ENCODE measurements at regions of chr15 and their contacts with region 1.

Region 1: DNA sequence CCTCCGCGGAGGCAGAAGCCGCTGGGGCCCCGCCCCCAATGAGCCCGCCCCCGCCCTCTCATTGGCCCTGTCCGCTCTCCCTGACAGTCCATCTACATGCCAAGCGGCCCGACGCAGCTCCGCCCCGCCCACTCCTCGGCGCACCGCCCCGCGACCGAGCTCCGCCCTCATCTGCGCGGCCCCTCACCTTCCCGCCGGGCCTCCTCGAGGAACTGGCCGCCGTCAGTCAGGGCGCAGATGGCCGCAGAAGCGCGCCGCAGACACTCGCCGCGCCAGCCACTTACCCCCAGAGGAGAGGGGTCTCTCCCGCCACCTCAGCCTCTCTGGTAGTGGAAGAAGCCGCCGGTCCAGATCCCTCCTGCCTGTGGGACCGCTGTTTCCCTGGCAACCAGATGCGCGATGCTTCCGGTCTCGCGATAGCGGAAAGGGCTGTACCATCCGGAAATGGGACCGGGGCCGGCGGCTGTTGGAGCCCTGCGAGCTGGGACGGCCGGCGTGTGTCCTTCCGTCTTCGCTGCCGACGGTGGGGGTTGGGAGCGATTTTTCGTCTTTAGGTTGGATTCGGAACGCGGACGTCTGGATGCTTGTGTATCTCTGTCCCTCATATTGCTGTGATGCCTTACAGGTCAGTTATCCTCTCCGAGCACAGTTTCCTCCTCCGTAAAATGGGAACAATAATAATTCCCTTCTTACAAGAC is at the start of gene FSIP1:
- DNase-seq: peak; percentile 97
- H3K4me3 Mint-ChIP-seq: peak within 1 kb of the TSS; percentile 79
- H3K27ac Mint-ChIP-seq: peak within 1 kb of the TSS; percentile 93
- H3K4me1 Mint-ChIP-seq: peaks cover 41% of the 10 kb centered on the region
- H3K27me3 Mint-ChIP-seq: no peaks in the 10 kb centered on the region
- total RNA-seq, gene FSIP1: 0.29 to 0.68 TPM

Region 2: GRCh38 chr15:38554354-38554753 is 1228.2 kb before region 1 on chr15:
- CTCF ChIA-PET with region 1: no interaction called
- POLR2A ChIA-PET with region 1: no interaction called
- intact Hi-C with region 1: loop called (anchors 10 kb)
- DNase-seq: peak; percentile 72
- H3K4me3 Mint-ChIP-seq: peak overlapping the region; percentile 15
- H3K27ac Mint-ChIP-seq: peak overlapping the region; percentile 99
- H3K4me1 Mint-ChIP-seq: peaks cover 89% of the 10 kb centered on the region
- H3K27me3 Mint-ChIP-seq: no peaks in the 10 kb centered on the region

Region 3: DNA sequence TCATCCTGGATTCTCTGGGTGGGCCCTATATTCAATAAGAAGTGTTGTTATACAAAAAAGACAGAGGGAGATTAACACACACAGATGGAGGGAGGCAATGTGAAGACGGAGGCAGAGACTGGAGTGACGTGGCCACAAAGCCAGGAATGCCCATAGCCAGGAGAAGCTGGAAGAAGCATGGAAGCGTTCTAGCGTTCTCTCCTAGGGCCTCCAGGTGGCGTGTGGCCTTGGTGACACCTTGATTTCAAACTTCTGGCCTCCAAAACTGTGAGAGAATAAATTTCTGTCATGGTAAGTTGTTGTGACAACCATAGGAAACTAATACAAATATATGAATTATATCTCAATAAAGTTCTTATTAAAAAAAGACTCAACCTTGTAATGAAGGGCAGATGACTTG is 180.4 kb before region 1 on chr15:
- CTCF ChIA-PET with region 1: no interaction called
- POLR2A ChIA-PET with region 1: no interaction called
- intact Hi-C with region 1: no loop called
- DNase-seq: no peak
- H3K4me3 Mint-ChIP-seq: no peak overlapping the region
- H3K27ac Mint-ChIP-seq: no peak overlapping the region
- H3K4me1 Mint-ChIP-seq: no peaks in the 10 kb centered on the region
- H3K27me3 Mint-ChIP-seq: no peaks in the 10 kb centered on the region

Region 4: DNA sequence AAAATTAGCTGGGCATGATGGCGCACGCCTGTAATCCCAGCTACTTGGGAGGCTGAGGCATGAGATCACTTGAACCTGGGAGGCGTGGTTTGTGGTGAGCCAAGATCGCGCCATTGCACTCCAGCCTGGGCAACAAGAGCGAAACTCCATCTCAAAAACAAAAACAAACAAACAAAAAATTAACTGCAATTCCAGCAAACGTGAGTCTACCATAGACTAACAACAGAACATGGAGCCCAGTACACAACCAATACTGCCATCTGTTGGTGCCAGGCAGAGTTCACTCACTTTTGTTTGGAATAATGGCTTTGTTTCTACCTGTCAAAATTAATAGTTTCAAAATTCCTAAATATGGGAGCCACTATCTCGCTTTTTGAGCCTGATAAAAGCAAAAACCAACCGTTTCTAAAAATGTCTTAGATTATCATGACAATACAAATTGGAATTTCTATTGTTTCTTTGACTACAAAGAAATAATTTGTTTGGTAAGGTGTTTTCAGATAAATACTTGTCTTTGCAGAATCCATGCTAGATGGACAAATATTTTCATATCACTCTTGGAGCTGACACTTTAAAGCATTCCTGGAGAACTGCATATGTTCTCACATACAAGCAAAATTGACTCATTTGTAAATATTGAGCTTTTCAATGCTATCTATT is 92.4 kb after region 1 on chr15:
- CTCF ChIA-PET with region 1: interaction called, 29 read pairs
- POLR2A ChIA-PET with region 1: no interaction called
- intact Hi-C with region 1: loop called (anchors 1 kb)
- DNase-seq: peak; percentile 35
- H3K4me3 Mint-ChIP-seq: no peak overlapping the region
- H3K27ac Mint-ChIP-seq: no peak overlapping the region
- H3K4me1 Mint-ChIP-seq: peaks cover 10% of the 10 kb centered on the region
- H3K27me3 Mint-ChIP-seq: peaks cover under 1% of the 10 kb centered on the region

Region 5: DNA sequence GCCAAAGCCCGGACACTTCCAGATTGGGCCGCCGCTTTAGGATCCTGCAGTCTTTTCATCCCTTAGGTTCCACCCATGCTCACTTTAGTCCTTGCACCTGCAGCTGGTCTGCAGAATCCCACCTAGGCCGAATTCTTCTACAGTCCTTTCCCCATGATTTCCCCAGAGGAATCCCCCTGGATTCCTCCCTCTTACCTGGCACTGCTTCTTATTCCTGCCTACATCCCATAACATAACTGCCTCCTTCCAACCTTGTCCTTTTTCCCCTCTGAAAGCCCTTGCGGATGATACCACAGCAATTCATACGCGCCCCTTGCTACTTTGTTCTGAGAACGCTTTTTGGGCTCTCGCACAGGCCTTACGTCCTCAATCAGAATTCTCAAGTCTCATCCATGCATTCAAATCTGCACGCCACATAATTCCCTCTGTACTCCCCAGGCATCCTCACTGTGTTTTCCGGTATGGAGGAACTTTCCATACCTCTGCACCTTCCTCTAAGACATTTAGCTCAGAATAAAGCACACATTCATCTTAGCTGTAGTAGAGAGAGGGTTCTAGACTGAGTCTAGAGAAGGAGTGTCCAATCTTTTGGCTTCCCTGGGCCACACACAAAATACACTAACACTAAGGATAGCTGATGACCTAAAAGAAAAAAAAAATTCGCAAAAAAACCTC is 151.9 kb after region 1 on chr15:
- CTCF ChIA-PET with region 1: interaction called, 5 read pairs
- POLR2A ChIA-PET with region 1: interaction called, 4 read pairs
- intact Hi-C with region 1: loop called (anchors 5 kb)
- DNase-seq: no peak
- H3K4me3 Mint-ChIP-seq: peak overlapping the region; percentile 84
- H3K27ac Mint-ChIP-seq: peak overlapping the region; percentile 19
- H3K4me1 Mint-ChIP-seq: peaks cover 34% of the 10 kb centered on the region
- H3K27me3 Mint-ChIP-seq: peaks cover 1% of the 10 kb centered on the region

Region 6: GRCh38 chr15:40038638-40039543 is 256.3 kb after region 1 on chr15 and contains the start of gene SRP14:
- CTCF ChIA-PET with region 1: interaction called, 5 read pairs
- POLR2A ChIA-PET with region 1: no interaction called
- intact Hi-C with region 1: loop called (anchors 2 kb)
- DNase-seq: peak; percentile 97
- H3K4me3 Mint-ChIP-seq: peak within 1 kb of the TSS; percentile 98
- H3K27ac Mint-ChIP-seq: peak within 1 kb of the TSS; percentile 91
- H3K4me1 Mint-ChIP-seq: peaks cover 27% of the 10 kb centered on the region
- H3K27me3 Mint-ChIP-seq: no peaks in the 10 kb centered on the region
- total RNA-seq, gene SRP14: 168 to 170 TPM

Region 7: DNA sequence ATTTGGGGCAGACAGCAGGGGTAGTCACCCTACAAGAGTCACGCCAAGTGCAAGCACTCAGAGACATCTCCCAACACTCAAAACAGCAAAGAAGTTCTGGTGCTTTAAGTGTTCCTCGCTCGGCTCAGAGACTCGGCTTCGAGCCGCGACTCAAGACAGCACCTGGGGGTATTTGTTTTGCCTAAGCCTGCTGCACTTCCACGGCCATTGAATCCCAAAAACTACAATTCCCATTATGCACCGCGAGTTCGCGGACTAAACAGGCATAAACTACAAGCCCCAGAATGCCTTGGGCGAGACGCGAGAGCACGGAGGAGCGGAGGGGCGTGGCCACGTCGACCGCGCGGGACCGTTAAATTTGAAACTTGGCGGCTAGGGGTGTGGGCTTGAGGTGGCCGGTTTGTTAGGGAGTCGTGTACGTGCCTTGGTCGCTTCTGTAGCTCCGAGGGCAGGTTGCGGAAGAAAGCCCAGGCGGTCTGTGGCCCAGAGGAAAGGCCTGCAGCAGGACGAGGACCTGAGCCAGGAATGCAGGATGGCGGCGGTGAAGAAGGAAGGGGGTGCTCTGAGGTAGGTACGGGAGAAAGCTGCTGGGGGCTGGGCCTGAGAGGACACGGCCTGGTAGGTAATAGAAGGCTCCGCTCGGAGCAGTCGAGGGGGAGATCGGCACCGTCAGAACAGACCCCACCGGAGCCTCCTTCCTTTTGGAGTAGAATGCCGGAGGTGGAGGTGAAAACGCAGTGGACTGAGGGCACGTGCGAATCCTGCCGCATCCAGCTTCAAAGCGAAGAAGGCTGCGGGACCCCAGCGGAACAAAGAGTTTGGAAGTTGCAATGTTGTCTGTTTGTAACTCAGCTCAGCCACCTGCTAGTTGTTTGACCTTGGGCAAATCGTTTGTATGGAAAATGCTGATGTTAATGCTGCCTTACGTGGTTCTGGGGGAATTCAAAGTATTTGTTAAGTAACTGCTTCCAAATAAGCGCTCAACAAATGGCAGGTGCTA is 378.4 kb after region 1 on chr15 and contains the start of gene BUB1B:
- CTCF ChIA-PET with region 1: no interaction called
- POLR2A ChIA-PET with region 1: no interaction called
- intact Hi-C with region 1: loop called (anchors 1 kb)
- DNase-seq: peak; percentile 96
- H3K4me3 Mint-ChIP-seq: no peak within 1 kb of the TSS
- H3K27ac Mint-ChIP-seq: no peak within 1 kb of the TSS
- H3K4me1 Mint-ChIP-seq: peaks cover 6% of the 10 kb centered on the region
- H3K27me3 Mint-ChIP-seq: no peaks in the 10 kb centered on the region
- total RNA-seq, gene BUB1B: 88.8 to 96.1 TPM